AG04449 (cell line): ENCODE measurements at regions of chr19 and their contacts with region 1.

Region 1: DNA sequence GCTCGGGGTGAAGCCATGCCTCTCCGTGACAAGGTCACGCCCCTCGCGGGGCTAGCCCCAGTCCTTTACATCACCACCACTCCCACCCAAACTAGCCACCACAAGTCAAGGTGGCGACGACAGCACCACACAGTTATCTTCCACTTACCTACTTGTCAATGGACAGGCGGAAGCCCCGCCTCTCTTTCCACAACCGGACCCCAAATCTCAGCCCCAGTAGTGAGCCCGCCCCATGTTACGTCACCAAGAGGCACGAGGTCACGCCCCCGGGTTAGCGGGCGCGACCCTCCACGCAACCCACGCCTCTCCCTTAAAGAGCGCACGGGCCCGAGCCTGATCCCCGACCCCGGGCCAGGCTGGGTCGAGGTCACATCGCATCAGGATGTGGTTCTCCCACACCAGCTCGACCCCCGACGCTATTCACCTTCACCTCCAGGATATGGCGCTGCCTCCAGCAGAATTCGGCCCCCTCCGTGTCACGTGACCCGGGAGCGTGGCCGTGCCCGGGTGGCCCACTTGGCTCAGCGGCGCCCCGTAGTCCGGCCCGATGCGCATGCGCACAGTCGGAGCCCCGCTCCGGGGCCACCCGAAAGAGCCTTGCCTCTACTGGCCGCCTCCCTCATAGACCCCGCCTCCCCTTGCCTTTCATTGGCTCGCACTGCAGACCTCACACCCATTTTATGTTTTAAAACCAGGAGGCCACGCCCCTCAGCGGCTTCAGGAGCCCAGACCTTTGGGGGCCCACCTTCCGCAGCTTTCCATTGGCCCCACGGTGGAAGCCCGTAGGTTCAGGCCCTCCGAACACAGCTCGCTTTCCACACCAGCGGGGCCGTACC is 18.2 kb downstream of the SYDE1 start:
- DNase-seq: peak; percentile 80
- H3K4me3 ChIP-seq: peak overlapping the region; percentile 92
- CTCF ChIP-seq: peak; percentile 3

Region 2: GRCh38 chr19:15115111-15116053 is 10.1 kb before region 1 on chr19:
- CTCF ChIA-PET with region 1: interaction called, 10 read pairs
- POLR2A ChIA-PET with region 1: interaction called, 9 read pairs
- DNase-seq: no peak
- H3K4me3 ChIP-seq: no peak overlapping the region
- CTCF ChIP-seq: no peak

Region 3: GRCh38 chr19:15141108-15141507 is 15.7 kb after region 1 on chr19:
- CTCF ChIA-PET with region 1: no interaction called
- POLR2A ChIA-PET with region 1: no interaction called
- DNase-seq: no peak
- H3K4me3 ChIP-seq: no peak overlapping the region
- CTCF ChIP-seq: no peak

Region 4: DNA sequence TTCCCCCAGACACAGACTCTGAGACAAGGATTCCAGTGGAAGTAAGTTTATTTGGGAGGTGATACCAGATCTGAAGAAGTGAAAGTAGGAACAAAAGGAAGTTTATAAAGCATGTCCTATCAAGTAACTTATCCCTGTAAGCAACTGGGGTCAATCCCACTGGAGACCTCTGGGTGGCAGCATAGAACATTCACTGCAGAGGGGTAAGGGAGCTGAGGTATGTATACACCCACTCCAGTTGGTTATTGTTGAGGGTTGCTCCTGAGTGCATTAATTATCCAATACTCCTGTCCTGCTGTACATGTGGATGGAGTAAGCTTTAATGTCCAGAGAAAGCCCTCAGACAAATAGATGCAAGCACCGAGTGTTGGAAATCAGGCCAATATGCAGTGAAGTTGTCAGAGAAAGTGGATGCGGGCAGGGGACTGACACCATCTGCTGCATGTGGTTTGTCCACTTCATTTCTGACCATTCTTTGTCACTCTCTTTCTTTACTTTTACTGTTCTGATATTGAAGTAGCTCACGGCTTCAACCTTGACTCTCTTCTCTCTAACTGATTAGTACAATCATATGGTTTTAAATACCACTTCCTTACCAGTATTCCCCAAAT is 28.7 kb after region 1 on chr19:
- CTCF ChIA-PET with region 1: interaction called, 24 read pairs
- POLR2A ChIA-PET with region 1: interaction called, 3 read pairs
- DNase-seq: no peak
- H3K4me3 ChIP-seq: no peak overlapping the region
- CTCF ChIP-seq: peak; percentile 57

Region 5: GRCh38 chr19:15264061-15264932 is 138.8 kb after region 1 on chr19:
- CTCF ChIA-PET with region 1: no interaction called
- POLR2A ChIA-PET with region 1: no interaction called
- DNase-seq: no peak
- H3K4me3 ChIP-seq: no peak overlapping the region
- CTCF ChIP-seq: peak; percentile 81